Heart right ventricle (tissue), 16 donors: ENCODE measurements at regions of chr10 and their contacts with region 1.

Region 1: DNA sequence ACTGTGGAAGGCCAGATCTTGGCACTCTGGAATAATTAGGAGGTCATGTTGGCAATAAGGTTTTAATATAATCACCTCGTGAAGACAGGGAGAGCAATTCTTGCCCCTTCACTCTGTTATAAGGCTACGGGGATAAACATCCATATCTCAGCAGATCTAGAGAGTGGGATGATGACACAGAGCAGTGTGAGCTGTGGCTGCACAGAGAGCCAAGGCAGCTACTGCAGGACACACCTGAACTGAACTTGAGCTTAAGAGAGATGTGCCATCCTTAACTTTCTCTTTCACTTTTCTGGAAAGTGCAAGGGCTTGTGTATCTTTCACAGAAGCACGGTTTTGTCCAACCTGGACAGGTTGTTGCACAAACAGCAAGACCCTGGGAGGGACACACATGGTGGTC is 174.7 kb downstream of the GATA3 start:
- DNase-seq: no peak
- ATAC-seq: no peak
- H3K4me3 ChIP-seq: no peak overlapping the region
- H3K27ac ChIP-seq: no peak overlapping the region
- H3K4me1 ChIP-seq: no peaks in the 10 kb centered on the region
- H3K27me3 ChIP-seq: peaks cover 0 to 3% (median 0%) of the 10 kb centered on the region in 7 donors
- CTCF ChIP-seq: no peak

Region 2: DNA sequence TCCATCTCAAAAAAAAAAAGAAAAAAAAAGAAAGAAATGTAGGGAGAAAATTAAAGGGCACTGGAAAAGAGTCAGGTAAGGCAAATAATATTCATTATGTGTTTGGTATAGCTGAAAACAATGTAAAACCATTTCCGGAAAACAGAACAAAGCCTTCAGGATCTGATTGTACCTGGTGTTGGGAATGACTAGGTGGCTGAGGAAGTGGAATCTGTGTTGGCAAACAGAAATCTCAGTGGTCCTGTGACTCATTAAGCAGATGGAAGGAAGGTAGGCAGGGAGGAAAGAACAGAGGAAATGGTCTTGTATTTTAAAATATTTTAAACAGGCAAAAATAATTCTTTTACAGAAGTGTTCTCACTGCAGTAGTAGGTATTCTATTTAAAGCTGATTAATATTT is 230.3 kb before region 1 on chr10:
- intact Hi-C with region 1: no loop called
- DNase-seq: no peak
- ATAC-seq: no peak
- H3K4me3 ChIP-seq: no peak overlapping the region
- H3K27ac ChIP-seq: no peak overlapping the region
- H3K4me1 ChIP-seq: no peaks in the 10 kb centered on the region
- H3K27me3 ChIP-seq: no peaks in the 10 kb centered on the region
- CTCF ChIP-seq: no peak

Region 3: GRCh38 chr10:8193546-8193945 is 35.6 kb before region 1 on chr10:
- intact Hi-C with region 1: loop called in 1 of 10 experiments (anchors 1 kb)
- DNase-seq: no peak
- ATAC-seq: no peak
- H3K4me3 ChIP-seq: no peak overlapping the region
- H3K27ac ChIP-seq: no peak overlapping the region
- H3K4me1 ChIP-seq: no peaks in the 10 kb centered on the region
- H3K27me3 ChIP-seq: peaks cover 0 to 6% (median 0%) of the 10 kb centered on the region in 7 donors
- CTCF ChIP-seq: no peak